ENCODE measurements at regions of chr4 and their contacts with region 1.

Region 1: DNA sequence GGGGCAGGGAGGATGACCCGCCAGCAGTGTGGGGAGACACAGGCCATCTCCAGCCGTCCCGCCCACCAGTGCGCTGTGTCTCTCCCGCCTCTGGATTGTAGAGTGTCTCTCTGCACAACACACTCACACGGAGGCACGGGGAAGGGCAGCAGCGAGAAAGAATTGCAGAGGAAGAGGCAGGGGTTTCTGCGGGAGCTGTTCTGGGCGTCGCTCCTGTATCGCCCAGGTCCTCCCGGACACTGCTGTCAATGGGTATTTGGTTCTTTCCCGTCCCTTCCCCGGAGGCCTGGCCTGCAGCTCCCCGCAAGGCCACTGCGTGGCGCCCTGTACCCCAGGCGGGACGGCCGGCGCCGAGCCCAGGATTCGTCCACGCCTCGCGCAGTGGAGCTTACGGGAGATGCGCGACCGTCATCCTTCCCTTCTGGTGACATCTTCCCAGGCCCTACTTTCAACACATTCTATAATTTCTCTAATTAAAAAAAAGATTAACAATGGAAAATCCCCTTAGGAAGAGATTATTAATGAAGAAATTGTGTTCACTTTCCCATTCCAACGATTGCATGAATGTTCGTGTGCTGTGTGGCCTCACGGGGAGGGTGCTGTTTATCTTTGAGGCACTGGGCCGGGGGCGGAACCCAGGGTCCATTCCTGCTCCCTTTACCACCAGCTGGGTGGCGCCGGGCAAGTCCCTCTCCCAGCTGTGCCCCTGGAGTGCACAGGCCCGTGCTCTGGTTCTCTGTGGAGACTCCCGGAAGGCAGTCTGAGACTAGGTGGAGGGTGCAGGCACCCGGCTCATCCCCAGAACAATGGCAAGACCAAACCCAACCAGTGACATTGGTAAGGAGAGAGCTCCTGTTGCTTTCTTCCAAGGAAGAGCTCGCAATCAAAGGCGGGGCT is 95.7 kb downstream of the CPZ start:
- DNase-seq: peak in 1 of 2 experiments; percentile 31
- H3K4me3 ChIP-seq: no peak overlapping the region
- H3K27ac ChIP-seq: no peak overlapping the region
- H3K4me1 ChIP-seq: no peaks in the 10 kb centered on the region
- H3K27me3 ChIP-seq: peaks cover 77% of the 10 kb centered on the region
- CTCF ChIP-seq: peak; percentile 46; the same call in 1 of the 2 replicates

Region 2: DNA sequence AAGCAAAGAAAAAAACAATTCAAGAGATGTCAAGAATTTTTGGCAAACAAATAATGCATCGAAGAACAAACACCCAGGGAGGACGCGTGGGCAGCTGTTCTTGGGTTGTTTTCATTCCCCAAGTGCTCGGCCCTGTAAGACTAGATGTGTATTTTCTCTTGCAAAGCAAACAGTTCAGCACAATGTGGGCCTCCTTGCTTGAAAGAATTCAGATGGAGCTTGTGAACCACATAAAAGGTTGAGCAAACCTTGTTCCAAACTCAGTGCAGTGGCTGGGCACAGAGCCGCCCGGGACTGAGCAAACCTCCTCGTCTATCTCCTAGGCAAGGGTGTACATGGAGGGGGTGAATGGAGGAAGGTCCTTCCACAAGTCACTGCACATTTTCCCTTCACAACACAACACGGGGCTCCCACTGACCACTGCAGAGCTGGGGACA is 336.3 kb before region 1 on chr4:
- CTCF ChIA-PET with region 1: no interaction called
- POLR2A ChIA-PET with region 1: no interaction called
- intact Hi-C with region 1: no loop called
- DNase-seq: no peak
- H3K4me3 ChIP-seq: no peak overlapping the region
- H3K27ac ChIP-seq: no peak overlapping the region
- H3K4me1 ChIP-seq: peaks cover 38% of the 10 kb centered on the region
- H3K27me3 ChIP-seq: no peaks in the 10 kb centered on the region
- CTCF ChIP-seq: no peak

Region 3: GRCh38 chr4:8639777-8640720 is 48.2 kb before region 1 on chr4:
- CTCF ChIA-PET with region 1: no interaction called
- POLR2A ChIA-PET with region 1: no interaction called
- intact Hi-C with region 1: no loop called
- DNase-seq: no peak
- H3K4me3 ChIP-seq: no peak overlapping the region
- H3K27ac ChIP-seq: no peak overlapping the region
- H3K4me1 ChIP-seq: 0 out of 2 replicates have a peak, but pooled peaks cover 4% of the 10 kb centered on the region
- H3K27me3 ChIP-seq: no peaks in the 10 kb centered on the region
- CTCF ChIP-seq: no peak

Region 4: GRCh38 chr4:8675383-8675782 is 12.9 kb before region 1 on chr4:
- CTCF ChIA-PET with region 1: no interaction called
- POLR2A ChIA-PET with region 1: no interaction called
- intact Hi-C with region 1: no loop called
- DNase-seq: peak in 1 of 2 experiments; percentile 12
- H3K4me3 ChIP-seq: no peak overlapping the region
- H3K27ac ChIP-seq: no peak overlapping the region
- H3K4me1 ChIP-seq: no peaks in the 10 kb centered on the region
- H3K27me3 ChIP-seq: peaks cover 75% of the 10 kb centered on the region
- CTCF ChIP-seq: no peak

Region 5: GRCh38 chr4:8748236-8748575 is 59.9 kb after region 1 on chr4:
- CTCF ChIA-PET with region 1: no interaction called
- POLR2A ChIA-PET with region 1: no interaction called
- intact Hi-C with region 1: no loop called
- DNase-seq: no peak
- H3K4me3 ChIP-seq: no peak overlapping the region
- H3K27ac ChIP-seq: no peak overlapping the region
- H3K4me1 ChIP-seq: no peaks in the 10 kb centered on the region
- H3K27me3 ChIP-seq: peaks cover 55% of the 10 kb centered on the region
- CTCF ChIP-seq: no peak

Region 6: GRCh38 chr4:8917868-8918783 is 229.8 kb after region 1 on chr4:
- CTCF ChIA-PET with region 1: no interaction called
- POLR2A ChIA-PET with region 1: no interaction called
- intact Hi-C with region 1: loop called (anchors 2 kb)
- DNase-seq: peak in 1 of 2 experiments; percentile 73
- H3K4me3 ChIP-seq: no peak overlapping the region
- H3K27ac ChIP-seq: no peak overlapping the region
- H3K4me1 ChIP-seq: no peaks in the 10 kb centered on the region
- H3K27me3 ChIP-seq: peaks cover 58% of the 10 kb centered on the region
- CTCF ChIP-seq: peak; percentile 89